PC-9 (cell line): ENCODE measurements at regions of chr1 and their contacts with region 1.

Region 1: DNA sequence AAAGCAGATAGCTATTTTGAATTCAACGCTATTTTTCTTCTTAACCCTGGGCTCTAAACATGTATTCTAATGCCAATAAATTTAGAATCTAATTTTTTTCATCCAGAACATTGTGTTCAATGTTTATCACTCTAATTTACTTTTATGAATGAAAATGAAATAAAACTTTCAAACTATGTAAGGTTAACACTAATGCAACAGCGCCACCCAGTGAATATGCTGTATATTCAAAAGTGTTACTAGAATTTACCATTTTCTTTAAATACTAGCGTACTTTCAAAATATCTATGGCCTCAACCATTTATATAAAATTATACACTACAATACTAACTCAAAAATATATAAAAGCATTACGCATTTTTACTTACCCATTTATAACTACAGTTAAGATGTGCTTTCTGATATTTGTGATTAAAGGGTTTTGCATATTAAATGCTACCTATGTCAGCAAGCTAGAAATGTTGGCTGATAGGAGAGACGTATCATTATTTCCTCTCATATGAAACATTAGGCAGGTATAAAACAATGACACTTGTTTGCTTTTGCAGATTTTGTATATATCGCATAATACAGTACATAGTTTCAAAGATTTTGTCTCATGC is 5.9 kb upstream of the NUF2 start:
- DNase-seq: peak in 1 of 2 experiments; percentile 13
- H3K4me3 ChIP-seq: no peak overlapping the region
- H3K27ac ChIP-seq: no peak overlapping the region
- H3K4me1 ChIP-seq: peaks cover 11% of the 10 kb centered on the region
- H3K27me3 ChIP-seq: no peaks in the 10 kb centered on the region
- CTCF ChIP-seq: peak; percentile 88

Region 2: GRCh38 chr1:162612606-162613400 is 703.1 kb before region 1 on chr1:
- CTCF ChIA-PET with region 1: no interaction called
- POLR2A ChIA-PET with region 1: no interaction called
- intact Hi-C with region 1: loop called (anchors 10 kb)
- DNase-seq: no peak
- H3K4me3 ChIP-seq: no peak overlapping the region
- H3K27ac ChIP-seq: no peak overlapping the region
- H3K4me1 ChIP-seq: no peaks in the 10 kb centered on the region
- H3K27me3 ChIP-seq: no peaks in the 10 kb centered on the region
- CTCF ChIP-seq: no peak

Region 3: DNA sequence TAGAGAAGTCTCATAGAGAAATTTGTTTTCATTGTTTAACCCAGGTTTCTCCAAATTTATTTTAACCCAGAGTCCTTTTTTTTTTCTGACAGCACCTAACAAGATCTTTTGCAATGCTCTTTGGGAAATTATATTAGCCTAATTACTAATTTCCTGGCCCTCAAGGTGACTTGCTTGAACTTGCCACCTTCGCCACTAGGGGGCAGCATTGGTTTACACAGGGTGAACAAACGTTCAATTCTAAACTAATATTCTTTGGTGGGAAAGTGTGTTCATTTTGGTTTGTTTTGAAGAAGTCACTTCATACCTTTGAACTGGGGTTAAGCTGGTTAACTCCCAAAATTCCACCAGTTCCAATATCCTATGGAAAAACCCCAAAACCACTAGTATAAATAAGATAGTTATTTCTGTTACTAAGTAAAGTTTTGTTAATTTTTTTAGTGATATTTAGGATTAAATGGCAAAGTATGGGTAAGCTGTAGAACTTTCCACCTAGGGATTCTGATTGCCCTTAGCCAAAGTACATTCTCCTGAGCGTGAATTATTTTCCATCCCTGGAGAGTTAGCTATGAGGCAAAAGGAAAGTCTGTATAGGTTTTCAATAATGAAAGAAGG is 467.9 kb before region 1 on chr1:
- CTCF ChIA-PET with region 1: interaction called, 14 read pairs
- POLR2A ChIA-PET with region 1: no interaction called
- intact Hi-C with region 1: loop called (anchors 1 kb)
- DNase-seq: peak; percentile 45 to 63
- H3K4me3 ChIP-seq: no peak overlapping the region
- H3K27ac ChIP-seq: no peak overlapping the region
- H3K4me1 ChIP-seq: no peaks in the 10 kb centered on the region
- H3K27me3 ChIP-seq: no peaks in the 10 kb centered on the region
- CTCF ChIP-seq: peak; percentile 96

Region 4: DNA sequence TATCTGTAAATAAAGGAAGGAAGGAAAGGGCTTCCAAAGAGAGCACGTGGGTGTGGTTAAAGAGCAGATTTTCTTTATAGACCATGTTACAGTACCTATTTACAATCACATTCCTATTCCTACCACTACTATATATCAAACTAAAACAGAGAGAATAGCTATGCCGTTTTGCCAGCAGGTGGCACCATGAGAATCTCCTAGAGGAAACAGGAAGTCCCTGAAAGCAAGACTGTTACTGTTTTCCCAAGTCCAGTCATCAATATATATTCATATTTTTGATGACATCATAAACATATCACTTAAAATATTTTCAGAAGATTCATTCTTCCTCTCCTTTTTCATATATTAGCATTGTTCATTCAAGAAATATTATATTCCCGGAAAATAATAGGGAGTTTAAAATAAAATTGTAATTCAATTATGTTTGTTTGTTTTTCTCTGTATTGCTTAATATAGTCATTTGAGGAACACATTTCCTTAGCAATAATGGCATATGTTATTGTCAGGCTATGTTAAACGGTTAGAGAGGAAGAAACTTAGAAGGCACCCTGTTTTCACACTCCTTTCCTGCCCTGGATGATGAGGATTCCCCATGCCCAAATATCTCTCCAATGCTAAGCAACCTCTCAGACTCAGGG is 461.5 kb before region 1 on chr1:
- CTCF ChIA-PET with region 1: interaction called, 14 read pairs
- POLR2A ChIA-PET with region 1: no interaction called
- intact Hi-C with region 1: loop called (anchors 1 kb)
- DNase-seq: peak; percentile 60 to 68
- H3K4me3 ChIP-seq: no peak overlapping the region
- H3K27ac ChIP-seq: no peak overlapping the region
- H3K4me1 ChIP-seq: peaks cover 28% of the 10 kb centered on the region
- H3K27me3 ChIP-seq: no peaks in the 10 kb centered on the region
- CTCF ChIP-seq: peak; percentile 82

Region 5: DNA sequence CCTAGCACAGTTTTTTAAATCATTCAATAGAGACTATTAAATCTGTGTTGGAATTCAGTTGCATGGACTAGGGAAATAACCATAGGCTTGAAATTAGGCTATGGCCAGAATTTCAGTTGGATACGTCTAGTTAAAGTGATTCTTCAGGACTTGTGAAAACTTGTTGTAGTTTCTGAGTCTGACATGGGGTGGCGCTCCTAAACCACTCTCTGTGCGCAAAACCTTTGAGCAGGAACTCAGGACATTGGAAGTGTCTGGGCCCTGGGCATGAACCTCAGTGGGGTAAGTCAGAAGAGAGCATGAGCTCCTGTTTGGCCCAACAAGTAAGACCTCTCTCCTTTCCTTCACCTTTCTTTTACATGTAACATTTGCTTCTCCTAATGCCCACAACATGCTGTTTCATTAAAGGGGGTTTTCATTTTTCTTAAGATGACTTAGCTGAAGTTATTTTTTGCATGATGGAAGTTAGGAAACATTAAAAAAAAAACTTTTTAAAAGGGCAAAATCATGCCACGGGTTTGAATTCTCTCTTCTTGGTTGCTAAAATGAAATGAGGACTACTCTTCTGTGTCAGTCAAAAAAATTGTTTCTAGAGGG is 437.8 kb before region 1 on chr1:
- CTCF ChIA-PET with region 1: no interaction called
- POLR2A ChIA-PET with region 1: no interaction called
- intact Hi-C with region 1: loop called (anchors 1 kb)
- DNase-seq: peak in 1 of 2 experiments; percentile 47
- H3K4me3 ChIP-seq: no peak overlapping the region
- H3K27ac ChIP-seq: no peak overlapping the region
- H3K4me1 ChIP-seq: no peaks in the 10 kb centered on the region
- H3K27me3 ChIP-seq: no peaks in the 10 kb centered on the region
- CTCF ChIP-seq: peak; percentile 89

Region 6: DNA sequence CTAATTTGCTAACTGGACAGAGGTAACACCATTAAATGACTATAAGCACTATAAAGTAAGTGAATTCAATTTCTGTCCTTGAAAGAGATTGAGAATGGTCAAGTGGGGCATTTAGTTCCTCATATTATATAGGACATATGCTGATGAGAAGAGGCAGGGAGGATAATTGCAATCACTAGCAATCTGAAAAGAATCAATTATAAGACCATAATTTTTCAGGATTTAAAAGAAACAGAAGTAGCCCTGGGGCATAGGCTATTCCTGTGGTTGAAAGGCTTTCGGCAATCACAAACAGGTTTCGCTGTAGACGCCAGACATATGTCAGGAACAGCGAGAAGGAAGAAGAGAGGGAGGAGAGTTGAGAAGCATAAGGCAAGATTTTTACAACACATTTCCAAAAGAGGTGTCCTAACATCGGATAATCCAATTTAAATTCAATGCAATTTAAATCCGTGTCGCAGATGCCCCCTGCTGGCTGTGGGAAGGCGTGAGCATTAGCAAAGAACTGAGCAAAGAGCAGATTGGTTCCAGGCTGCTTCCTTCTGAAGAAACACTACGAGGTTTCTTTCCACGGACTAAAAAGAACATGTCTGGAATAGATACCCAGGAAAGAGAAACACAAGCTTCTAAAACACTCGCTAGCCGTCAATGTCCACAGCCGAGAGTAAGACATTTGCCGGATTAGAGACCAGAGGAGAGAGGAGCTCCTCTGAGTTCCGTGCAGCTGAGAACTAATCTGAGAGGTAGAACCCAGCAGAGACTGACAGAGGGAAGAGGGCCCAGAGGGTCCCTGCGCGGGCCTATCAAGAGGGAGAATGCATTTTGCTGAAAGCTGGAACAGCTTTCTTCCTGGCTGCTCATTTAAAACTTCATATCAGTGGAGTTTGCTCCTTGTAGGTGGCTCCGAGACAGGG is 141.1 kb before region 1 on chr1:
- CTCF ChIA-PET with region 1: no interaction called
- POLR2A ChIA-PET with region 1: no interaction called
- intact Hi-C with region 1: loop called (anchors 5 kb)
- DNase-seq: peak; percentile 32 to 40
- H3K4me3 ChIP-seq: peak overlapping the region; percentile 34; the same call in 1 of the 2 replicates
- H3K27ac ChIP-seq: no peak overlapping the region
- H3K4me1 ChIP-seq: no peaks in the 10 kb centered on the region
- H3K27me3 ChIP-seq: no peaks in the 10 kb centered on the region
- CTCF ChIP-seq: peak; percentile 91

Region 7: DNA sequence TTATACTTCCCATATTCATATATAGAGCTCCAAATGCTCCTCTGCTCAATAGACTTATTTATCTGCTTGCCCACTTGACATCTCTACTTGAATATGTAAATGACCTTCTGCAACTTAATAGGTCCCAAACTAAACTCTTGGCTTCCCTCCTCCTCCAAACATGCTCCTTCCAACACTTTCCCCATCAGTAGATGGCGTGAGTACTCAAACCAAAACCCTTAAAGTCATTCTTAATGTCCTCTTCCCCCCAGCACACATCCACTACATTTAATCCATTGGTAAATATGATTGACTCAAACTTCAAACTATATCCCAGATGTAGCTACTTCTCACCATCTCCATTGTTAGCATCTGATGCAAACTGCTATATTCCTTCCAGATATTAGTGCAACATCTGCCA is 1194.6 kb after region 1 on chr1:
- CTCF ChIA-PET with region 1: no interaction called
- POLR2A ChIA-PET with region 1: no interaction called
- intact Hi-C with region 1: no loop called
- DNase-seq: no peak
- H3K4me3 ChIP-seq: no peak overlapping the region
- H3K27ac ChIP-seq: no peak overlapping the region
- H3K4me1 ChIP-seq: no peaks in the 10 kb centered on the region
- H3K27me3 ChIP-seq: no peaks in the 10 kb centered on the region
- CTCF ChIP-seq: no peak